Dorsolateral prefrontal cortex (tissue), 120 donors: ENCODE measurements at regions of chr7 and their contacts with region 1.

Region 1: DNA sequence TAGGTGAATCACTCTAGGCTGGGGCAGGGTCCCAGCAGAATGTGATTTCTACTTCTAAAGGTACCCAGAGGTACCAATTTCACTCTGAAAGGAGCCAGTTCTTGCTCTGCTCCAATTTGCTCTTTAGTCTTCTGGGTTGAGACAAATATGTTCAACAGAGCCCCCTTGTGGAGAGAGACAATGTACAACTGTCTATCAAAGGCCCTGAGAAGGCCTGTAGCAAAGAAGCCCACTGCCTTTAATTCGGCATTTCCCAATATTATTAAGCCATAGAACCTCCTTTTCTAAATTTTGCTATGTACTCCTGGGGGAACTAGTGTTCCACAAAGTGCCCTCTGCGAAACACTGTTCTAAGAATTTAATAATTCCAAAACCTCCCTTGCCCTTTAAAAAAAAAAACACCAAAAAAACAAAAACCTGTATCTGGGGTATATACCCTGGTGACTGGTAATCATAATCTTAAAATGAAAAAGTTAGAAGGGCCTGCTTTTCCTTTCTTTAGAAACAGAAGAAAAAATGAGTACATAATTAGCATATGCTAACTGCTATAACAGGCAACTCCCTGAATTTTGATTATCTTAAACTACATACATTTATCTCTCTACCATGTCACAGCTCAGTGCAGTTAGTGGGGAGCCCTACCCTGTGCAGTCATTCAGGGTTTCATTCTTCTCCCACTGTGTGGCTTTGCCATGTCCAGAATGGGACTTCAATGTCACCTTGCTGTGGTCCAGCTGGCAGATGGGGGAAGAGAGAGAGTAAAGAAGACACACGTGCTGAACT is 160.9 kb upstream of the BMPER start:
- DNase-seq: no peak
- H3K4me3 ChIP-seq: no peak overlapping the region
- H3K27ac ChIP-seq: no peak overlapping the region
- H3K27me3 ChIP-seq: no peaks in the 10 kb centered on the region
- CTCF ChIP-seq: peak in 49 of 56 donors; percentile 10 to 56 (median 32)

Region 2: GRCh38 chr7:33243319-33243881 is 501.1 kb before region 1 on chr7:
- intact Hi-C with region 1: loop called in 1 of 2 experiments (anchors 10 kb)
- DNase-seq: no peak
- H3K4me3 ChIP-seq: no peak overlapping the region
- H3K27ac ChIP-seq: no peak overlapping the region
- H3K27me3 ChIP-seq: no peaks in the 10 kb centered on the region
- CTCF ChIP-seq: peak; percentile 48 to 90 (median 77)

Region 3: DNA sequence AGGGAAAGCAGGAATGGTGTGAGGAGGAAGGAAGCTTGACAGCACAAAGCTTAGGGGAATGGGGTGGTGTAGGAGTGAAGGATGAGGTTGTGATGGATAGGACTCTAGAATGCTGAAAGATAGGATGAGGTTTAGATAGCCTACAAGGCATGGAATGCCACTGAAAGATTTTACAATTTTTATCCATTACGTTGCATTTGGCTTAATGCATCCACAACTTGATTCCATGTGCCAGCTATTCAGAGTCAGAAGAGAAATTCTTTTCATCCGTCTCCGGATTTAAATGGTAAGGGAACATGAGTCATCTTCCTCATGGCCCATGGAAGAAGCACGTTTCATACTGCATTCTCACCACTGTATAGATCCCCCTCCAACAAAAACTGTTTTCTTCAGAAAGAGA is 51.5 kb before region 1 on chr7:
- intact Hi-C with region 1: no loop called
- DNase-seq: no peak
- H3K4me3 ChIP-seq: no peak overlapping the region
- H3K27ac ChIP-seq: no peak overlapping the region
- H3K27me3 ChIP-seq: no peaks in the 10 kb centered on the region
- CTCF ChIP-seq: no peak

Region 4: GRCh38 chr7:33774762-33775523 is 30.5 kb after region 1 on chr7:
- intact Hi-C with region 1: no loop called
- DNase-seq: peak in 3 of 10 donors; percentile 5 to 53 (median 43)
- H3K4me3 ChIP-seq: no peak overlapping the region
- H3K27ac ChIP-seq: peak overlapping the region in 13 of 59 donors; percentile 1 to 56 (median 21)
- H3K27me3 ChIP-seq: no peaks in the 10 kb centered on the region
- CTCF ChIP-seq: no peak

Region 5: GRCh38 chr7:34727464-34727995 is 983.0 kb after region 1 on chr7:
- intact Hi-C with region 1: no loop called
- DNase-seq: no peak
- H3K4me3 ChIP-seq: no peak overlapping the region
- H3K27ac ChIP-seq: no peak overlapping the region
- H3K27me3 ChIP-seq: no peaks in the 10 kb centered on the region
- CTCF ChIP-seq: no peak